ENCODE measurements at regions of chr11 and their contacts with region 1.

Region 1: DNA sequence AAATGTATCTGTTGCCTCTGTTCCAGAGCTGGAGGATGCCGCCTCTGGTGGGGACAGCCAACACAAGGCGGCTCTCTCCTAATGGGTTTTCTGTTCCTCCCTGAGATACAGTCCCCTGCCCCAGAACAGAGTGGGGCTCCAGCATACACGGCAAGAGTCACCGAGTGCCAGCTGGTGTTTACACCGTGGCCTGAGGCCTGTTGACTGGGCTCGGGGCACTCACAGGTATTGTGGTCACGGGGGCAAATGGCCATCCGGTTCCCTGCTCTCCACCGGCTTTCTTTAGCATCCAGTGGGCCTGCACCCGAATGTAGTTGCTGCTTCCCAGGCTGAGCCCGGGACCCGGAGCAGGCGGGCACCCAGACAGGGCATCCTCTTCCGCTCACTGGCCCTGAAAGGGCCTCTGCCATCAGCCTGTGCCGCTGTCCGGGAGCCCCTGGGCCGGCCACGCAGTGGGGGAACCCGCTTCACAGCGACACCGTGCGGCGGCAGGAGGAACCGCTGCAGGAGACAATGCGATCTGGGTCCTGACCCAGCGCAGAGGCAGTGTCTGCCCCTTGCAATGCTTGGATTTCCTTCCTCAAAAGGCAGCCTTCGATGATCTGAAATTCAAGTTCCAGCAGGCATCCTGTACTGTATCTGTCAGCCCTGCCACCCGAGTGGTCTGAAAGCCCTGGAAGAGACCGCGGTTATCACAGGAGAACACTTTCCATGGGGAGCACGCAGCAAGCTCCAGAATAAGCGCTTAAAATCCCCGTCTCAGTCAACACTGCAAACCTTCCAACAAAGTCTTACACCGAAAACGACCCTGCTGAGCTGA is 859 bp upstream of the KRTAP5-5 start:
- DNase-seq: peak; percentile 49 to 82 (median 60)
- ATAC-seq: peak; percentile 57 to 89 (median 84)
- H3K4me3 ChIP-seq: no peak overlapping the region
- H3K27ac ChIP-seq: no peak overlapping the region
- H3K4me1 ChIP-seq: peaks cover 0 to 8% (median 3%) of the 10 kb centered on the region in 12 donors
- H3K27me3 ChIP-seq: peaks cover 0 to 49% (median 12%) of the 10 kb centered on the region in 9 donors
- CTCF ChIP-seq: peak; percentile 79 to 98 (median 89)
- POLR2A ChIP-seq: no peak

Region 2: GRCh38 chr11:1541474-1542204 is 87.1 kb before region 1 on chr11:
- intact Hi-C with region 1: loop called in 8 of 10 experiments (anchors 2 to 10 kb)
- DNase-seq: peak in 2 of 5 donors; percentile 23 to 51
- ATAC-seq: peak; percentile 22 to 48 (median 28)
- H3K4me3 ChIP-seq: no peak overlapping the region
- H3K27ac ChIP-seq: peak overlapping the region in 1 of 12 donors; percentile 22
- H3K4me1 ChIP-seq: peaks cover 0 to 14% (median 7%) of the 10 kb centered on the region in 12 donors
- H3K27me3 ChIP-seq: peaks cover 0 to 19% (median 6%) of the 10 kb centered on the region in 9 donors
- CTCF ChIP-seq: no peak
- POLR2A ChIP-seq: no peak

Region 3: GRCh38 chr11:1546536-1547400 is 81.9 kb before region 1 on chr11:
- intact Hi-C with region 1: loop called in 9 of 10 experiments (anchors 2 to 10 kb)
- DNase-seq: peak; percentile 54 to 71 (median 60)
- ATAC-seq: peak in 3 of 4 donors; percentile 29 to 69 (median 57)
- H3K4me3 ChIP-seq: peak overlapping the region; percentile 34 to 63 (median 52)
- H3K27ac ChIP-seq: peak overlapping the region in 11 of 12 donors; percentile 72 to 95 (median 85)
- H3K4me1 ChIP-seq: peaks cover 5 to 32% (median 19%) of the 10 kb centered on the region in 12 donors
- H3K27me3 ChIP-seq: peaks cover 0 to 35% (median 9%) of the 10 kb centered on the region in 9 donors
- CTCF ChIP-seq: peak; percentile 57 to 93 (median 81)
- POLR2A ChIP-seq: no peak

Region 4: DNA sequence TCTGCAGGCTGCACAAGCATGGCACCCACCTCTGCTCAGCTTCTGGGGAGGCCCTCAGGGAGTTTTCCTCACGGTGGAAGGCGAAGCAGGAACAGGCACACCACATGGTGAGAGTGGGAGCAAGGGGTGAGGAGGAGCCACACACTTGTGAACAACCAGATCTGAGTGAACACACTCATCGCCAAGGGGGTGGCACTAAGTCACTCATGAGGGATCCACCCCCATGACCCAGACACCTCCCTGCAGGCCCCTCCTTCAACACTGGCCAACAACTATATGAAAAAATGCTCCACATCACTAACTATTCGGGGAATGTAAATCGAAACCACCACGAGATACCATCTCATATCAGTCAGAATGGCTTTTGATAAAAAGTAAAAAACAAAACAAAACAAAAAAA is 29.9 kb before region 1 on chr11:
- intact Hi-C with region 1: loop called in 2 of 10 experiments (anchors 2 kb)
- DNase-seq: no peak
- ATAC-seq: no peak
- H3K4me3 ChIP-seq: no peak overlapping the region
- H3K27ac ChIP-seq: no peak overlapping the region
- H3K4me1 ChIP-seq: peaks cover 0 to 10% (median 0%) of the 10 kb centered on the region in 12 donors
- H3K27me3 ChIP-seq: peaks cover 0 to 8% (median under 1%) of the 10 kb centered on the region in 9 donors
- CTCF ChIP-seq: no peak
- POLR2A ChIP-seq: no peak

Measured in heart left ventricle (tissue), 16 donors.